Cardiac septum (tissue), 1 donor: ENCODE measurements at regions of chr1 and their contacts with region 1.

Region 1: GRCh38 chr1:171644805-171645483 is 7.5 kb downstream of the MYOC start:
- DNase-seq: peak; percentile 83

Region 2: DNA sequence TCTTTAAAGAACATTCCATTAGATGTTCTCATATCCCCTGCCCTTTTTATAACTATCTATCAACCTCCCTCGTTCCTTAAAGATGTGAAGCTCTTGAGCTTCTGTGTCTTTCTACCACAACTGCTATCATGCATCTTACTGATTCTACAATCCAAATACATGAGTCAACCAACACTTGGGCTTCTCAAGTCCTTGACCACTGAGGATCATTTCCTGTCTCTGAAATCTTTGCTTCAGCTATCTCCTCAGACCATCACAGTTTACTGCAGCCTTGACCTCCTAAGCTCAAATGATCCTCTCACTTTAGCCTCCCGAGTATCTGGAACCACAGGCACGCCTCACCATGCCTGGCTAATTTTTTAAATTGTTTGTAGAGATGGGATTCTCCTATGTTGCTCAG is 255.8 kb before region 1 on chr1:
- intact Hi-C with region 1: no loop called
- DNase-seq: no peak

Region 3: GRCh38 chr1:171715813-171716251 is 70.9 kb after region 1 on chr1:
- intact Hi-C with region 1: loop called (anchors 1 kb)
- DNase-seq: no peak

Region 4: GRCh38 chr1:171741872-171742576 is 97.1 kb after region 1 on chr1 and contains the start of gene VAMP4:
- intact Hi-C with region 1: loop called (anchors 2 kb)
- DNase-seq: peak; percentile 94
- total RNA-seq, gene VAMP4: 8.7 TPM

Region 5: DNA sequence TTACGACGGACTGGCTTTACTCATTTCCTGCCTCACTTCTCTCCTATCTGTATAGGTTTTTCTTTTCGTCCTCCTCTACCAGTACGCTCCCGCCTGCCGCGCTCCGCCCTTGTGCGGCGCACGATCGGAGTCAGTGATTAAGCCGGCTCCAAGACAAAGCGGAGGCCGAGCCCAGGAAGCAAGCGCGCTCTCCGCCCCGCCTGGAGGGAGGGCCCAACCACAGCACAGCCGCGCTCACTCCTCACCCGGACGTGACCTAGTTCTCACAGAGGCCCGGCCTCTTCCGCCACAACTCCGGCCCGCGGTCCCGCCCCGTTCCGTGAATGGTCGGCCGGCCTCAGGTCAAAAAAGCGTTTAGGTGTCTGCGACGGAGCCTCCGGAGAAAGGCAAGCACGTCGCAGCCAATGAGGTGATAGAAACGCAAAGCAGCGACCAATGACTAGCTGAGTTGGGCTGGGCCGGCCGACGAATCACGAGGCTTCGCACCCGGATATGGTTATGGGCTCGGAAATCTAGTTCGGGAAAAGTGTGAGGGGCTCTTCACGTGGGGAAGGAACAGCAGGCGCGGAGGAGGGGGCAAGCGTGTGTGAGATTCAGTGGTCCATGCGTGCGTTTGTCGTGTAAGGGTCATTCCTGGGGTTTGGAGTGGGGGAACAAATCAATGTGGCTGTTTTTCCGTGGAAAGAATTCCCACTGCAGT is 136.4 kb after region 1 on chr1 and contains the start of gene METTL13:
- intact Hi-C with region 1: loop called (anchors 5 kb)
- DNase-seq: peak; percentile 100
- total RNA-seq, gene METTL13: 14.4 TPM

Region 6: DNA sequence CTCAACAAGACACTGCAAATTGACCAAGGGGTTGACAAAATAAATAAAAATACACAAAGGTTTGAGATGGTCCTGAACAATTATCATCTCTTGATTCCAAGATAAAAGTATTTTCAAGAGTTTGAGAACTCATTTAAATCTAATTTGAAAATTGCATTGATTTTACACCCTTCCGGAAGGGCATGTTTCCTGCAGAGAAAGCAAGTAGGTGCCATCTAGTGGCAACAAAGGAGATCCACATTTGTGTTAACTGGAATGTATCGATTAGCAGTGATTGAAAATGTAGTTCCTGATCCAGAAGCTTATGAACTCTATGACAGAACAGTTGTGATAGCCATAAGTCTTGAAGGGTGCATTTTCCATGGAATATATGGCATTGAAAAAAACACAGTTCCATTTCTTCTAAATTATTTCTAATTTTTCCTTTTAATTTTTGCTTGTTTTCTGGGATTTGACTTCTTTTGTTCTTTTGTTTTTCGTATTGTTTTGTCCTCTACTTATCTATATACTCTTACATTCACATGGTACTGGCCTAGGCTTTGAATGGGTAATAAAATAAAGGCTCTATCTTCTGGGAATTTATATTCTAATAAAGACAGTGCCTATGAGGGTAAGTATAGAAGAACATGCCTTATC is 340.0 kb after region 1 on chr1:
- intact Hi-C with region 1: loop called (anchors 5 kb)
- DNase-seq: no peak